ENCODE measurements at regions of chr6 and their contacts with region 1.

Region 1: DNA sequence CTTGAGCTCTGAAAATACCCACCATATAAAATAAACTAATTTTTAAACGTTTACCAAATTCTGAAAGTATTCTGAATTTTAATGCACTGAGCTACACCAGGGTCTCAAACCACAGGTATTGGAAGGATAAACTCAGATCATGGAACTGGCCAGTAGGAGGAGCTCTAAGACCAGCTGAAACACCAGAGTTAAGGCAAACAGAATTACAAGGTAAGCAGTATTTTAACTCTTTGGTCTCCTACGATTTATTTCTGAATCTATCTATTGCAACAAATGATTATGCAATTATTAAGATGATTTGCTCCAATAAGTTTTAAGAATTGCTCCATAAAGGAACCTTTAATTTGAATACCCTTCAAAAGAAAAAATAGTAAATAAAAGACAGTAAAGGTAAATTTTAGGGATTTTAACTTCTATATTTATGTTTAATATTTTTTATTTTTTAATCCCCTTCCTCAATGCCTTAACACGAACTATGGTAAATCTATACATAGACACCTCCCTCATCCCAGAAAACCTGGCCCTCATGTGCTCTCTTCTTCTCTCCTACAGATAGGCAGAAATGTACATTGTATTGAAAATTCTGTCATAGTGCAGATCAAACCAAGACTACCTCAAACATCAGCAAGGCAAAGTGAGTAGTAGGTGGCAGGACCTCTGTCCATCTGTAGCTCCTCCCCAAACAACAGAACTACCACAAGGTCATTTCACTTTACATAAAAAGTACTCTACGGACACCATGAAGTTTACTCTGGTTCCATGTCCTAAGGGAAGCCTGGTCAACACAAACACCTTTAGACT is 58.4 kb downstream of the SMLR1 start:
- DNase-seq: peak; percentile 47
- CTCF ChIP-seq: peak; percentile 80

Region 2: DNA sequence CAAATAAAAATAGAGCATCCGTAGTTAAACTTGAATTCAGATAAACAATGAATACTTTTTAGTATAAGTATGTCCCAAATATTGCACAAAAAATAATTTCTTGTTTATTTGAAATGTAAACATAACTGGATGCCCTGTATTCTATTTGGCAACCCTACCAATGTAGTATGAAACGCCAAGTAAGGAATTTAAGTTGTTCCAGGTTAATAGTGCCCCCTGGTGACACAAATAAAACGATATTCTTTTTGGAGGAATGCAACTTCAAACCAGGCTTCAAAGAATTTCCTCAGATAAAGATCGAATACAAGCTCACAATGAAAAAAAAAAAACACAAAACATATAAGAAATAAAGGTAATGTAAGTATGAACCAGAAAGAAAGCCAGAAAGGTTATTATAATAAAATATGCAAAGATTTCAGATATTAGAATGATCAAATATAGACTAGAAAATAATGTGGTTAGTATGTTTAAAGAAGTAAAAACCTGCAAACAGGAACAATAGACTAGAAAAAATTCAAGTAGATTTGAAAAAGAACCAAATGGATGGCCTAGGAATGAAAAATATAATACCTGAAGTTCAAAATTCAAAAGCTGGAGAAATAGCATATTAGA is 231.3 kb after region 1 on chr6:
- in situ Hi-C with region 1: loop called (anchors 5 kb)
- DNase-seq: peak; percentile 36
- CTCF ChIP-seq: peak; percentile 39

Region 3: DNA sequence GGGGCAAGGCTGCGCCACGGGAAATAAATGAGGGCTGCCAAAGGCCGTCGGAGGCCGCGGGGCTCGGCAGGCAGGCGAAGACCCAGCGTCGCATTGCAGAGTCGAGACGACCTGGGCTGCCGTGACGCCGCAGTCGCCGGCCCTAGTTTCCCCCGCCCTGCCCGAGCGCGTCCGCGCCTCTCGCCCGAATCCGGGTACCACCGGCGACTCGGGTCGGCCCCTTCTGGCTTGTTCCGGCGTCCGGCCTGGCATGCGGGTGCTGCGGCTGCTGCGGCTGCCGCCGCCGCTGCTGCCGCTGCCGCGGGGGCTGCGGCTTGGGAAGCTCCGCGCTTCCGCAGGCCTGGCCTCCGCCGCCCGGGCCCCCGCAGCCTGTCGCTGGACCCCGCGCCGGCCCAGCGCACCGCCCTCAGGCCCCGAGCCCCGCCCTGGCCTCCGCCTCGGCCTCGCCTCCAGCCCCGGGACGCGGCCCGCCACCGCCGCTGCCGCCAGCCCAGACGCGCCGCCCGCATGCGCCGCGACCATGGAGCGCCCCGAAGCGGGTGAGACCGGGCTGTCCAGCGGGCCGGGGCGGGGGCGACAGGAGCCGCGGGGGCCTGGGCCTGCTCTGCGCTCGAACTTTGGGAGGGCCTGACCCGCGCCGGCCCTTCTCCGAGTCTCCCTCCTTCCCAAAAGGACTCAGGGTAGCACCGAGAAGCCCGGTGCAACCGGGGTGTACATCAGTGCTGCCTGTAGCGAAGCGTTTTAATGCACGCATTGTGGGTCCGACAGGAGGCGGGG is 249.8 kb after region 1 on chr6 and contains the start of gene AKAP7:
- in situ Hi-C with region 1: no loop called
- DNase-seq: peak; percentile 85
- CTCF ChIP-seq: no peak

Region 4: GRCh38 chr6:131532580-131533039 is 647.0 kb after region 1 on chr6:
- in situ Hi-C with region 1: loop called (anchors 25 kb)
- DNase-seq: peak; percentile 50
- CTCF ChIP-seq: no peak